Activated CD4-positive, alpha-beta T cell treated with anti-CD3 and anti-CD28 coated beads, Interleukin-2, amount 10 ng/mL, durations not matched to agents 24 days and 14 days (primary cell): ENCODE measurements at regions of chr19 and their contacts with region 1.

Region 1: GRCh38 chr19:29735800-29736199 is 20.7 kb upstream of the C19orf12 start:
- DNase-seq: no peak
- H3K4me3 Mint-ChIP-seq: no peak overlapping the region
- H3K27ac Mint-ChIP-seq: no peak overlapping the region
- H3K4me1 Mint-ChIP-seq: no peaks in the 10 kb centered on the region
- H3K27me3 Mint-ChIP-seq: peaks cover 13% of the 10 kb centered on the region

Region 2: GRCh38 chr19:30649934-30650614 is 914.3 kb after region 1 on chr19:
- intact Hi-C with region 1: loop called (anchors 10 kb)
- DNase-seq: peak; percentile 76
- H3K4me3 Mint-ChIP-seq: no peak overlapping the region
- H3K27ac Mint-ChIP-seq: no peak overlapping the region
- H3K4me1 Mint-ChIP-seq: no peaks in the 10 kb centered on the region
- H3K27me3 Mint-ChIP-seq: peaks cover 6% of the 10 kb centered on the region